Activated CD4-positive, alpha-beta T cell treated with anti-CD3 and anti-CD28 coated beads, Interleukin-2, amount 10 ng/mL, durations not matched to agents 7 days and 5 days (primary cell): ENCODE measurements at regions of chr17 and their contacts with region 1.

Region 1: DNA sequence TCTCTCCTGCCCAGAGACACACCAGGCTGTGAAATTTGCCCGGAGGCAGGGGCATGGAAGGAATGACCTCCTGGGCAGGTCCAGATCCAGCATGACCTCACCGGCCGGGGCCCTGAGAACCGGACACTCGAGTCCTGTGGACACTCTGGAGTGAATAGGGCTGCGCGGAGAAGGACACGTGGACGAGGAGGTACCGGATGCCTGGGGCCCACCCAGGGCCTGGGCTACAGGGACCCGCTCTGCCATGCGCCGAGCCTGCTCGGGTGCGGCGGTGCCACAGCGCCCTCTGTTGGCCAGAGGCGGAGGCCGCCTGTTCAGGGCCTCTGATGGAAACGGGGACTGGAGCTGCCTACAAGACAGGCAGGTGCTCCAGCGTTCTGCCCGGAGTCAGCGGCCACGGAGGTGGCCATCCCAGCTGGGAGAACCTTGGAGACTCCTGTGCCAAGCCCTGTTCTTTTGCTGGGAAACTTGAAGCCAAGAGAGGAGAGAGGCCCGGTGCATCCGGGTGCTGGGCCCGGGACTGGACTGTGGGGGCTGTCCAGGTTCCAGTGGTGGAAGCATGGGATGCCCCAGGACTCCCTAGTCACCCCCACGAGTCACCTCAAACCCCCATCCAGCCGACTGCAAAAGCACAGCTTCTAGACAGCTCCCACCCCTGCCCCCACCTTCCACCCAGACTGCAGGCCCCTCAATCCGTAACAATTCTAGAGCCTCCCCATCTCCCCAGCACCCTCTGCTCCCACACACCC is 19.3 kb upstream of the NXPH3 start:
- DNase-seq: peak; percentile 82
- H3K4me3 Mint-ChIP-seq: no peak overlapping the region
- H3K27ac Mint-ChIP-seq: no peak overlapping the region
- H3K4me1 Mint-ChIP-seq: no peaks in the 10 kb centered on the region
- H3K27me3 Mint-ChIP-seq: peaks cover 2% of the 10 kb centered on the region

Region 2: DNA sequence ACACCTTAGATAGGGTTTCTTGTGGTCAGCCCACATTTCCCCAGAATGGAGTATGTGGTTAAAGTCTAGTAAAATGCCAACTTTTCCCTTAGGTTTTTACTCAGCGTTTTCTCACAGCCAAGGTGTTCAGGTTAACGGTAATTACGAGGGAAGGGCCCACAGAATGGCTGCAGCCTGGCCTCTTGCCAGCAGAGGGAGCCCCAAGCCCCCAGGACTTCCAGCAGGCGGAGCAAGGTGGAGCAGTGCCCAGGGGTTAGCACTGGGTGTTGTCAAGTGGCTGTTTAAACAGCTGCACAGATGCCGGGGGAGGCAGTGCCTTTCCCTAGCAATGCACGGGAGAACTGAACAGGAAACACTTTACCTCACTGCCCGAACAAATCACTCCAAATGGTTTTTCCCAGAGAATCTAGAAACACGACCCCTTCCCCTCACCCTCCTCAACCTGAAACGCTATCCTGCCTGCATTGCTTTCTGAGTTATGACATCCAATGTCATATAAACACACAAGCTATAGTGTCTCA is 148.4 kb before region 1 on chr17:
- CTCF ChIA-PET with region 1: interaction called, 32 read pairs
- POLR2A ChIA-PET with region 1: no interaction called
- DNase-seq: peak; percentile 86
- H3K4me3 Mint-ChIP-seq: no peak overlapping the region
- H3K27ac Mint-ChIP-seq: peak overlapping the region; percentile 74
- H3K4me1 Mint-ChIP-seq: peaks cover 45% of the 10 kb centered on the region
- H3K27me3 Mint-ChIP-seq: no peaks in the 10 kb centered on the region

Region 3: DNA sequence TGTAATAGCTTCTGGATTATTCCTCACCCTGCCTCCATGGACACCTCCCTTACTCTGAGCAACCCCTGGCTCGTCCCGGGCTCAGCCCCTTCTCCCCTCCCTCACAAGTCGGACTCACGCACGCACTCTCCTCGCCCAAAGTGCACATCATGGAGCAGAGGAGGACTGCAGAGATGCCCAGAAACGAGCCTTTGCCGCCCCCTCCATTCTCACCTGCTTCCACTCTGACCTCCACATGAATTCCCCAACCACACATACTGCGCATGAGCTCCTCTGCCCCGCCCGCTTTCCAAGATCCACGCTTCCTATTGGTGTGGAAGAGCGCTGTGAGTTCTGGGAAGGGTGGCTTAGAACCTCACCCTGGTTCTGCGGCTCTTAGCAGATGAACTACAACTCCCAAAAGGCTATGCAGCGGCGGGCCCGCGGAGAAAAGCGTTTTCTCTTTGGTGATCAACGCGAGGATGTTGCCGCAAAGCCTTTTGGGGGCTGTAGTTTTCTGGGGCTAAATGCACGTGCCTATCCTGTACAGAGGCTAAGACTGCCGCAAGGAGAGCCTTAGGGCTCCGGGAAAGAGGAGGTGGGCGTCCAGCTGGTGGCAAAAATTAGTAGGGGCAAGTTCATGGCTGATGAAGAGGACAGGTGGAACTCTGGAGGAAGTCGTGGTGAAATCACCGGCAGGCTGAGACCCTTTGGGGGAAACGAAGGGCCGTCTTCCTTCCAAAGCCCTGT is 141.6 kb before region 1 on chr17 and contains the start of gene PHB1:
- CTCF ChIA-PET with region 1: interaction called, 32 read pairs
- POLR2A ChIA-PET with region 1: no interaction called
- DNase-seq: peak; percentile 98
- H3K4me3 Mint-ChIP-seq: peak within 1 kb of the TSS; percentile 89
- H3K27ac Mint-ChIP-seq: peak within 1 kb of the TSS; percentile 84
- H3K4me1 Mint-ChIP-seq: peaks cover 20% of the 10 kb centered on the region
- H3K27me3 Mint-ChIP-seq: no peaks in the 10 kb centered on the region
- total RNA-seq, gene PHB1: 132 to 153 TPM

Region 4: DNA sequence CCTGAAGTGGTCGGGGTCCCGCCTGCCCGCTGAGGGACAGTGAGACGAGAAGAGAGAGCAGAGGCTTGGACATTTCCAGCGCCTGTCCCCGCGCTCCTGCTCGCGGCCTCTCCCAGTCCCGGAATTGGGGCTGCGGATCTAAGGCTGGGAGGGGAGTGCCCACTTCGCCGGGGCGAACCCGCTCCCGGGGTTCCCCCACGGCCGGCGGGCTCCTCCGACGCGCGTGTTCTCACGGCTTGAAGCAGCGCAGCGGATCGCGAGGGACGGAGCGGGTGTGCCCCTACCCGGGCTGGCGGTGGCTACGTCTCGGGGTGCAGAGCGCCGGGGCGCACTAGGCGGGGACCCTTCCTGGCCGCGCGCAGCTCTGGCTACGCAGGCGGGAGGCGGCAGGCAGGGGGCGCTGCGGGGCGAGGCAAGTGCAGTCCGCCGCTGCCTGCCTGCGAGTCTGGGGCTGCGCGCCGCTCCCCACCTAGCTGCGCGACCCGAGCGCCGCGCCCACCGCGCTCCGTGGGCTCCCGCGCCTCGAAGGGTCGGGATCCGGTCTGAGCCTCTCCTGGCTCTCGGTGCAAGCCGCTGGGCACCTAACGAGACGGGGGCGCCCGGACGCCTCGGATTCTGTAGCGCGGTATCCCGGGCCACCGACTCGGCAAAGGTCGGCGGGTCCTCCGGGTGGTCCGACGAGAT is 60.1 kb before region 1 on chr17:
- CTCF ChIA-PET with region 1: interaction called, 31 read pairs
- POLR2A ChIA-PET with region 1: no interaction called
- DNase-seq: peak; percentile 81
- H3K4me3 Mint-ChIP-seq: peak overlapping the region; percentile 66
- H3K27ac Mint-ChIP-seq: no peak overlapping the region
- H3K4me1 Mint-ChIP-seq: peaks cover 23% of the 10 kb centered on the region
- H3K27me3 Mint-ChIP-seq: peaks cover 74% of the 10 kb centered on the region

Region 5: GRCh38 chr17:49567871-49568694 is 11.7 kb after region 1 on chr17:
- CTCF ChIA-PET with region 1: interaction called, 35 read pairs
- POLR2A ChIA-PET with region 1: no interaction called
- DNase-seq: peak; percentile 83
- H3K4me3 Mint-ChIP-seq: peak overlapping the region; percentile 37
- H3K27ac Mint-ChIP-seq: no peak overlapping the region
- H3K4me1 Mint-ChIP-seq: peaks cover 31% of the 10 kb centered on the region
- H3K27me3 Mint-ChIP-seq: peaks cover 32% of the 10 kb centered on the region

Region 6: DNA sequence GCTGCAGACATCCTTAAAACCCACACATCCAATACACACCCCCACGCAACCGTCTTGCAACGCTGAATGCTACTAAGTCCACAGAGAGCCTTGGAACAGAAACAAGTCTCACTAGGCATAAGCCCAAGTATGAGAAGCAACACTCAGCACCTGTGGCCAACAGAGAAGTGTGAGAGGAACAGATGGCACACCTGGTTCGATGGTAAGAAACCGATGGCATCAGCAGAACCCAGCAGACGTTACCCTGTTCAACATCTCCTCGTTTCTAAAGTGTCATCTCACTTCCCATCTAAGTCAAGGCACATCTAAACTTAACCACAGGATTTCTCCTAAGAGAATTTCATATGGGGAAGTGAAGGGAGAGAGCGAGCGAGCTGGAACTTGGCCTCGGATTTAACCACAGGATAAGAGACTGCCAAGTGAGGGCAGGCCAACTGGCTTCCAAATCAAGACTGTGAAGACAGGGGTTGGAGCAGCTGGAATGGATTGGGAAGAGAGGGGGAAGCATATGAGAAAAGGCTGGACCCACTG is 60.3 kb after region 1 on chr17:
- CTCF ChIA-PET with region 1: no interaction called
- POLR2A ChIA-PET with region 1: no interaction called
- DNase-seq: no peak
- H3K4me3 Mint-ChIP-seq: no peak overlapping the region
- H3K27ac Mint-ChIP-seq: no peak overlapping the region
- H3K4me1 Mint-ChIP-seq: peaks cover 23% of the 10 kb centered on the region
- H3K27me3 Mint-ChIP-seq: no peaks in the 10 kb centered on the region

Region 7: DNA sequence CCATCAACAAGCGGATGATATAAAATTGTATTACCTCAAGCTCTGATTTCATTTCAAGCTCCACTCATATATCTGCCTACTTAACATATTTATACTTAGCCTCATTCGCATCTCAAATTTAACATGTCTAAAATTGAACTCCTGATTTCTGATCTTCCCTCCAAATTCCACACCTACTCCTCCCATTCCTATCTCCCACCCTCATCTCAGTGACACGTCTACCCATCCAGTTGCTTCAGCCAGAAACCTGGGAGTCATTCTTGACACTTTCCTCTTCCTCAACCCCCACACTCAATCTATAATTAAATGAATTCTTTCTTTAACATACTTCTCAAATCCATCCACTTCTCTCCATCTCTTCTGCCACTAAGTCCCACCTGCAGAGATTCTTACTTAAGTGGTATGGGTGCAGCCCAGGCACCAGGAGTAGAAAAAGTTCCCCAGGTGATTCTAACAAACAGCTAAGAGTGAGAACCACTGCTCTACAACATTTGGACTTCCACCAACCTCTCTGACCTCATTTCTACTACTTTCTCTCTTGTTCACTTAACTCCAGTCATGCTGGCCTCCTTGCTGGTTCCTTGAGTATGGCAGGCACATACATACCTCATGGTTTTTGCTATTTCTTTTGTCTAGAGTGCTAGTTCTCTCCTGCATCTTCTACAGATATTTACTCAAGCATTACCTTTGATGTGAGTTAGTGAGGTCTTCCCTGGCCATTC is 103.4 kb after region 1 on chr17:
- CTCF ChIA-PET with region 1: no interaction called
- POLR2A ChIA-PET with region 1: no interaction called
- DNase-seq: no peak
- H3K4me3 Mint-ChIP-seq: no peak overlapping the region
- H3K27ac Mint-ChIP-seq: no peak overlapping the region
- H3K4me1 Mint-ChIP-seq: peaks cover 25% of the 10 kb centered on the region
- H3K27me3 Mint-ChIP-seq: no peaks in the 10 kb centered on the region

Region 8: GRCh38 chr17:49694847-49695683 is 138.7 kb after region 1 on chr17:
- CTCF ChIA-PET with region 1: interaction called, 13 read pairs
- POLR2A ChIA-PET with region 1: no interaction called
- DNase-seq: peak; percentile 73
- H3K4me3 Mint-ChIP-seq: no peak overlapping the region
- H3K27ac Mint-ChIP-seq: peak overlapping the region; percentile 79
- H3K4me1 Mint-ChIP-seq: peaks cover 42% of the 10 kb centered on the region
- H3K27me3 Mint-ChIP-seq: no peaks in the 10 kb centered on the region